PC-9 (cell line): ENCODE measurements at regions of chr9 and their contacts with region 1.

Region 1: GRCh38 chr9:20552874-20553575 is 69.3 kb downstream of the MLLT3 start:
- DNase-seq: no peak
- H3K4me3 ChIP-seq: no peak overlapping the region
- H3K27ac ChIP-seq: peak overlapping the region; percentile 99
- H3K4me1 ChIP-seq: peaks cover 50% of the 10 kb centered on the region
- H3K27me3 ChIP-seq: no peaks in the 10 kb centered on the region
- CTCF ChIP-seq: 0 out of 2 replicates have a peak, but pooled peaks have one; percentile 30

Region 2: GRCh38 chr9:20426019-20426418 is 127.0 kb before region 1 on chr9:
- CTCF ChIA-PET with region 1: no interaction called
- POLR2A ChIA-PET with region 1: no interaction called
- intact Hi-C with region 1: no loop called
- DNase-seq: no peak
- H3K4me3 ChIP-seq: no peak overlapping the region
- H3K27ac ChIP-seq: no peak overlapping the region
- H3K4me1 ChIP-seq: no peaks in the 10 kb centered on the region
- H3K27me3 ChIP-seq: no peaks in the 10 kb centered on the region
- CTCF ChIP-seq: no peak

Region 3: DNA sequence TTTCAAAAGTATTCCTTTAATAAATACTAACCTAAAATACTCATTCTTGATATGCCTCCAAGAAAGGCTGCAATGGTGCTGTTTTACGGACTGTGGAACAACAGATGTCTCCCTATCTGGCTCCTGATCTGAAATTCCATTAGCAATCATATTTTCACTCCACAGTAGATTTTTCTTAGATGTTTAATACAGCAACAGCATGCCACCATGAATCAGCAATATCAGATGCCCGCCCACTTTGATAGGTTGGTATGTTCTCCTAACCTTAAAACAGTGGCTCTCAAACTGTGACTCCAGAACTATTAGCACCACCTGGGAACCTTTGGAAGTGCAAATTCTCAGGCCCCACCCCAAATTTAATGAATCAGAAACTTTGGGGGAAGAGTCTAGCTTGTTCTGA is 40.9 kb before region 1 on chr9:
- CTCF ChIA-PET with region 1: no interaction called
- POLR2A ChIA-PET with region 1: interaction called, 4 read pairs
- intact Hi-C with region 1: loop called (anchors 2 kb)
- DNase-seq: peak; percentile 49 to 80
- H3K4me3 ChIP-seq: no peak overlapping the region
- H3K27ac ChIP-seq: peak overlapping the region; percentile 77
- H3K4me1 ChIP-seq: peaks cover 20% of the 10 kb centered on the region
- H3K27me3 ChIP-seq: no peaks in the 10 kb centered on the region
- CTCF ChIP-seq: no peak